Heart left ventricle (tissue), 16 donors: ENCODE measurements at regions of chr6 and their contacts with region 1.

Region 1: DNA sequence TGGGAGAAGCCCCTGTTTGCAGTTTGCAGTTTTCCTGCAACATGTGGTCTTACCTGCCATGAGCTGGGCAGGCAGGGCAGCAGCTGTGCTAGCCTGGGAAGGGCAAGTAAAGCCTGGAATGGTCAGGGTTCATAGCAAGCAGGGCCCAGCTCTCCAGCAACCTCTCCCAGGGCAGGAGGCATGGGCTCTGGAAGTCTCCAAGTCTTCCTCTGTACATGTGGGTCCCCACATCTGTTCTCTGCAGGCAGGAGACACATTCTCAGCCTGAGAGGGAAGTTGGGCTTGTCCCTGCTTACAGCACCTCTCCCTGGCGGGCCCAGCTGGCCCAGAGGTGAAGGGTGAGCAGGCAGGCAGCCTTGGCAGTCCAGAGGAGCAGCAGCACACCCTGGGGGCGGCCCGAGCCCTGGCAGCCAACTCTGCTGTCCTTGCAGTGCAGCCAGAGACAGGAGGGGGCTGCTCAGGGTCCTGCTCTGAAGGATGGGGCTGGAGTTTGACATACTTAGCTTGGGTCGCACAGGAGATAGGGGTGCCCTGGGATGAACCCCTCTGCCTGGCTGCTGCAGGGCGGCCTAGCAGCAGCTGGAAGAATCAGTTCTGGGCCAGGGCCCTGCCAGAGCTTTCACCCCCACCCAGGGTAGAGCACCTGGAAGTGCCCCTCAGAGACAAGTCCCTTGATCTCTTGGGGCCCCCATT is 176.0 kb downstream of the MRPL14 start:
- DNase-seq: peak in 4 of 5 donors; percentile 58 to 83 (median 67)
- ATAC-seq: peak; percentile 49 to 67 (median 55)
- H3K4me3 ChIP-seq: no peak overlapping the region
- H3K27ac ChIP-seq: peak overlapping the region in 6 of 12 donors; percentile 24 to 98 (median 72)
- H3K4me1 ChIP-seq: peaks cover 0 to 33% (median 4%) of the 10 kb centered on the region in 12 donors
- H3K27me3 ChIP-seq: peaks cover 0 to 7% (median 0%) of the 10 kb centered on the region in 9 donors
- CTCF ChIP-seq: peak; percentile 29 to 66 (median 50)
- POLR2A ChIP-seq: no peak

Region 2: GRCh38 chr6:43667245-43668150 is 283.7 kb before region 1 on chr6:
- intact Hi-C with region 1: loop called in 2 of 10 experiments (anchors 10 kb)
- DNase-seq: peak; percentile 75 to 89 (median 81)
- ATAC-seq: peak; percentile 39 to 71 (median 52)
- H3K4me3 ChIP-seq: peak overlapping the region in 2 of 12 donors; percentile 13 to 24
- H3K27ac ChIP-seq: peak overlapping the region; percentile 11 to 87 (median 69)
- H3K4me1 ChIP-seq: peaks cover 11 to 47% (median 37%) of the 10 kb centered on the region in 12 donors
- H3K27me3 ChIP-seq: no peaks in the 10 kb centered on the region
- CTCF ChIP-seq: peak; percentile 89 to 98 (median 94)
- POLR2A ChIP-seq: no peak

Region 3: GRCh38 chr6:43774776-43775534 is 176.3 kb before region 1 on chr6:
- intact Hi-C with region 1: loop called in 6 of 10 experiments (anchors 2 to 5 kb)
- DNase-seq: peak; percentile 74 to 85 (median 79)
- ATAC-seq: peak; percentile 6 to 33 (median 20)
- H3K4me3 ChIP-seq: peak overlapping the region in 10 of 12 donors; percentile 64 to 99 (median 94)
- H3K27ac ChIP-seq: peak overlapping the region; percentile 89 to 99 (median 97)
- H3K4me1 ChIP-seq: peaks cover 8 to 81% (median 62%) of the 10 kb centered on the region in 12 donors
- H3K27me3 ChIP-seq: no peaks in the 10 kb centered on the region
- CTCF ChIP-seq: peak; percentile 71 to 89 (median 84)
- POLR2A ChIP-seq: peak in 1 of 2 donors; percentile 51

Region 4: GRCh38 chr6:43856005-43856765 is 95.0 kb before region 1 on chr6:
- intact Hi-C with region 1: loop called in 7 of 10 experiments (anchors 1 to 10 kb)
- DNase-seq: peak in 2 of 5 donors; percentile 46 to 53
- ATAC-seq: peak; percentile 14 to 79 (median 59)
- H3K4me3 ChIP-seq: no peak overlapping the region
- H3K27ac ChIP-seq: no peak overlapping the region
- H3K4me1 ChIP-seq: no peaks in the 10 kb centered on the region
- H3K27me3 ChIP-seq: no peaks in the 10 kb centered on the region
- CTCF ChIP-seq: peak in 10 of 12 donors; percentile 21 to 55 (median 38)
- POLR2A ChIP-seq: no peak

Region 5: GRCh38 chr6:43900911-43901732 is 50.1 kb before region 1 on chr6:
- intact Hi-C with region 1: no loop called
- DNase-seq: no peak
- ATAC-seq: peak in 2 of 4 donors; percentile 30 to 79
- H3K4me3 ChIP-seq: no peak overlapping the region
- H3K27ac ChIP-seq: no peak overlapping the region
- H3K4me1 ChIP-seq: peaks cover 0 to 11% (median under 1%) of the 10 kb centered on the region in 12 donors
- H3K27me3 ChIP-seq: no peaks in the 10 kb centered on the region
- CTCF ChIP-seq: no peak
- POLR2A ChIP-seq: no peak

Region 6: GRCh38 chr6:44002593-44003344 is 51.6 kb after region 1 on chr6:
- intact Hi-C with region 1: loop called in 2 of 10 experiments (anchors 2 to 5 kb)
- DNase-seq: peak; percentile 46 to 76 (median 59)
- ATAC-seq: peak in 3 of 4 donors; percentile 9 to 54 (median 50)
- H3K4me3 ChIP-seq: peak overlapping the region; percentile 3 to 49 (median 38)
- H3K27ac ChIP-seq: peak overlapping the region in 10 of 12 donors; percentile 47 to 97 (median 86)
- H3K4me1 ChIP-seq: peaks cover 0 to 52% (median 17%) of the 10 kb centered on the region in 12 donors
- H3K27me3 ChIP-seq: peaks cover 0 to 37% (median 17%) of the 10 kb centered on the region in 9 donors
- CTCF ChIP-seq: peak in 1 of 12 donors; percentile 31
- POLR2A ChIP-seq: no peak

Region 7: GRCh38 chr6:45305546-45305945 is 1354.3 kb after region 1 on chr6:
- intact Hi-C with region 1: no loop called
- DNase-seq: no peak
- ATAC-seq: no peak
- H3K4me3 ChIP-seq: no peak overlapping the region
- H3K27ac ChIP-seq: no peak overlapping the region
- H3K4me1 ChIP-seq: peaks cover 0 to 8% (median 0%) of the 10 kb centered on the region in 12 donors
- H3K27me3 ChIP-seq: no peaks in the 10 kb centered on the region
- CTCF ChIP-seq: no peak
- POLR2A ChIP-seq: no peak